SK-N-SH (cell line): ENCODE measurements at regions of chr2 and their contacts with region 1.

Region 1: DNA sequence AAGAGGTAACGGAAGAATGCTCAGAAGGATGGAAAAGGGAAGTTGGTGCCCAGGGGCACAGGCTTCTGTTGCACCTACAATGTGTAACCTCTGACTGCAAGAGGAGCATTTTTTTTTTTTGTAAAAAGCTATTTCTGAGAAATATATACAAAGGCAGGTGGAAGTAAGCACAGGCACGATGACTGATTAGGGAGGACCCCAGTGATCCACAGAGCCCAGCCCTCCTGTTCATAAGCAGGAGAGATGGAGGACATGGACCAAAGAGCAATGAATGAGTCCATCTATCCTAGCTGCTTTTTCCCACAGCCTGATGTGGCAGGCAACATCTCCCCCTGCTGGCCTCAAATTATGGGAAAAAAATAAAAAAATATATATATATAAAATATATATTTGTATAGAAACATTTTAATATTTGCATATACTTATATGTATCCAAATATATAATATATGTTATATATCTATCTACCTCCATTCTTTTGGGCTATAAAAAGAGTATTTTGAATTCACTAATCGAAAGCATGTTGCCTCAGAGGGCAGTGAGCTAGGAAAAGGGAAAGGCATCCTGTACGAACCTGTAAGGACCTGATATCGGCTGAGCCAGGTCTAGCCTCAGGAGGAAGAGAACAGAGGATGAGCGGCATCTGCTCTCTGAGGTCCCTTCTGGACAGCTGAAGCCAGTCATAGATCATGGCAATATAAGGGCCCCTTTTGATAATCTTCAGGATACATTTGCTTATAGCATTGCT is 166.0 kb upstream of the STK17B start:
- DNase-seq: peak; percentile 54
- H3K4me3 ChIP-seq: no peak overlapping the region
- H3K27ac ChIP-seq: no peak overlapping the region
- H3K4me1 ChIP-seq: peaks cover 0 to 11% of the 10 kb centered on the region in 2 experiments; a peak in 2 of 4 replicates
- H3K27me3 ChIP-seq: no peaks in the 10 kb centered on the region
- CTCF ChIP-seq: peak; percentile 55
- EP300 ChIP-seq: no peak
- RAD21 ChIP-seq: peak; percentile 72

Region 2: GRCh38 chr2:196291873-196292800 is 45.2 kb before region 1 on chr2:
- CTCF ChIA-PET with region 1: interaction called, 31 read pairs
- POLR2A ChIA-PET with region 1: no interaction called
- DNase-seq: no peak
- H3K4me3 ChIP-seq: no peak overlapping the region
- H3K27ac ChIP-seq: no peak overlapping the region
- H3K4me1 ChIP-seq: peaks cover 8 to 14% of the 10 kb centered on the region in 2 experiments
- H3K27me3 ChIP-seq: no peaks in the 10 kb centered on the region
- CTCF ChIP-seq: no peak
- EP300 ChIP-seq: no peak
- RAD21 ChIP-seq: no peak

Region 3: GRCh38 chr2:196322973-196323810 is 14.2 kb before region 1 on chr2:
- CTCF ChIA-PET with region 1: interaction called, 14 read pairs
- POLR2A ChIA-PET with region 1: no interaction called
- DNase-seq: no peak
- H3K4me3 ChIP-seq: no peak overlapping the region; a peak in 1 of 4 replicates
- H3K27ac ChIP-seq: peak overlapping the region; percentile 64 to 86; a peak in 3 of 4 replicates
- H3K4me1 ChIP-seq: peaks cover 0 to 25% of the 10 kb centered on the region in 2 experiments
- H3K27me3 ChIP-seq: no peaks in the 10 kb centered on the region
- CTCF ChIP-seq: no peak
- EP300 ChIP-seq: peak in 1 of 2 experiments; percentile 51; a peak in 1 of 4 replicates
- RAD21 ChIP-seq: no peak